Naive thymus-derived CD4-positive, alpha-beta T cell (primary cell): ENCODE measurements at regions of chr12 and their contacts with region 1.

Region 1: DNA sequence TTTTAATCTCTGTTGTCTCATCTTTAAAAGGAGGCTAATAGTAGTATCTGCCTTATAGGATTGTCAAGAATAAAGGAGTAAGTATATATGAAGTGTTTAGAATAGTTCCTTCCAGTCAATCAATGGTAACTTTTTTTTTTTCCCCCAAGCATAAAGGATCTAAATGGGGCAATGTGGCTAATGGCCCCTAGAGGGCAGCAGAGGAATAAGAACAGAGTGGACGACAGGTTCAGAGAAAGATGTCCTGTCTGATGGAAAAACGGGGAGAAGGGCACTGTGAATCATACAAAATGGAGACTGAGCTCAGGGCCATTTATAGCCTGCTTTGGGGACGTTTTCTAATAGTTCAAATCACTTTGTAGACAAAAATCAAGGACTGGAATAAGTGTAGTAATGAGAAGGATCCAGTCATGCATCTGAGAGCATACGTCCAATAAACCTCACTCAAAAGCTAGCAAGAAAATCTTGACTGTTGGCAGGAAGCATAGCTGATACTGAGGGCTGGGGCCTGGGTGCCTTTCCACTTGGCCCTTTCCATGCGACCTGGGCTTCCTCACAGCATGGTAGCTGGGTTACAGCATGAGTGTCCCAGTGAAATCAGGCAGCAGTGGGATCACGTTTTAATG is 51.3 kb downstream of the IFNG-AS1 start:
- DNase-seq: peak; percentile 19 to 72 (median 61)
- ATAC-seq: peak; percentile 84
- H3K4me3 ChIP-seq: no peak overlapping the region
- H3K4me3 Mint-ChIP-seq: peak overlapping the region in 2 of 10 donors; percentile 13 to 33
- H3K27ac ChIP-seq: no peak overlapping the region
- H3K27ac Mint-ChIP-seq: no peak overlapping the region
- H3K4me1 ChIP-seq: peaks cover 0 to 5% of the 10 kb centered on the region in 2 donors
- H3K4me1 Mint-ChIP-seq: peaks cover 0 to 24% (median 5%) of the 10 kb centered on the region in 7 donors
- H3K27me3 ChIP-seq: no peaks in the 10 kb centered on the region
- H3K27me3 Mint-ChIP-seq: no peaks in the 10 kb centered on the region

Region 2: DNA sequence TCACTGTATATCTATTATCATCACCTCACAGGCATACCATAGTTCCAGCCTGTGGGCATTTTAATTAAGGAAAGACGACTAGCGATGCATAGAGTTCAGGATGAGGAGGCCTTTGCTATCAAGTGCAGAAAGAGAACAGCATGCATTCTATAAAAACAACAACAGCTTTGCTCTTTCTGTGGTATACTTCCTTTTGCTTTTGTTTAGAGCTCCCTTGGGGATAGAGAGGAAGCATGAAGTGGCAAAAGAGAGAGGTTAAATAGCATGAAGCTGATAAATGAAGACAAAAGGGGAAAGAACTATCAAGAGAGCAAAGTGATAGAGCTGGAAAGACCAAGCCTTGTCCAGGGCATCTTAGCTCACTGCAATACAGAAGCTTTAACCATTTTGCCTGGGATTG is 27.9 kb before region 1 on chr12:
- CTCF ChIA-PET with region 1: no interaction called
- POLR2A ChIA-PET with region 1: no interaction called
- intact Hi-C with region 1: loop called in 1 of 2 experiments (anchors 1 kb)
- DNase-seq: no peak
- ATAC-seq: no peak
- H3K4me3 ChIP-seq: no peak overlapping the region
- H3K4me3 Mint-ChIP-seq: no peak overlapping the region
- H3K27ac ChIP-seq: no peak overlapping the region
- H3K27ac Mint-ChIP-seq: no peak overlapping the region
- H3K4me1 ChIP-seq: peaks cover 0 to 16% of the 10 kb centered on the region in 2 donors
- H3K4me1 Mint-ChIP-seq: peaks cover 0 to 4% (median 0%) of the 10 kb centered on the region in 7 donors
- H3K27me3 ChIP-seq: no peaks in the 10 kb centered on the region
- H3K27me3 Mint-ChIP-seq: no peaks in the 10 kb centered on the region

Region 3: DNA sequence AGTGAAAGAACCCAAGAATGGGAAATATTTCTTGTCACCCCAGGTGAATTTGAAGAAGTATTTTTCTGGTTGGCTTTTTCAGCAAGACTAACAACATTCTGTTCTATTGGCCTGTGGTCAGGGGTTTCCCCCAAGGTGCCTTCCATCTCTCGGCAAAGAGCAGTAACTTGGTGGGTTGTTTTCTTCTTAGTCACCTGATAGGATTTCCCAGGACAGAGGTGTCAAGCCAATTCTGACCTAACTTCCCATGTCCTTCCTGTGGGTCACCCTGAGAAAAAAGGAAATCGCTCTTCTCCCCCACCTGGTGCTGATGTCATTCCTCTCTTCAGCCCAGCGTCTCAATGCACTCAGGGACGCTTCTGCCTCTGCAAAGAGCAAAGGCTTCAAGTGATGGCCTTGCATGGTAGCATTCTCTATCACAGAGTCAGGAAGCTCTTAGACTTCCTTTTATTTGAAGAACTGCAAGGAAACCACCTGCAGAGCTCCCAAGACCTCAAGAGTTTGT is 135.0 kb after region 1 on chr12:
- CTCF ChIA-PET with region 1: interaction called, 3 read pairs
- POLR2A ChIA-PET with region 1: no interaction called
- intact Hi-C with region 1: loop called in 1 of 2 experiments (anchors 5 kb)
- DNase-seq: peak; percentile 35 to 90 (median 86)
- ATAC-seq: peak; percentile 93
- H3K4me3 ChIP-seq: peak overlapping the region; percentile 40
- H3K4me3 Mint-ChIP-seq: peak overlapping the region; percentile 69 to 86 (median 84)
- H3K27ac ChIP-seq: peak overlapping the region; percentile 78
- H3K27ac Mint-ChIP-seq: peak overlapping the region; percentile 87 to 97 (median 93)
- H3K4me1 ChIP-seq: peaks cover 20 to 65% of the 10 kb centered on the region in 2 donors
- H3K4me1 Mint-ChIP-seq: peaks cover 30 to 82% (median 67%) of the 10 kb centered on the region in 7 donors
- H3K27me3 ChIP-seq: no peaks in the 10 kb centered on the region
- H3K27me3 Mint-ChIP-seq: no peaks in the 10 kb centered on the region

Region 4: DNA sequence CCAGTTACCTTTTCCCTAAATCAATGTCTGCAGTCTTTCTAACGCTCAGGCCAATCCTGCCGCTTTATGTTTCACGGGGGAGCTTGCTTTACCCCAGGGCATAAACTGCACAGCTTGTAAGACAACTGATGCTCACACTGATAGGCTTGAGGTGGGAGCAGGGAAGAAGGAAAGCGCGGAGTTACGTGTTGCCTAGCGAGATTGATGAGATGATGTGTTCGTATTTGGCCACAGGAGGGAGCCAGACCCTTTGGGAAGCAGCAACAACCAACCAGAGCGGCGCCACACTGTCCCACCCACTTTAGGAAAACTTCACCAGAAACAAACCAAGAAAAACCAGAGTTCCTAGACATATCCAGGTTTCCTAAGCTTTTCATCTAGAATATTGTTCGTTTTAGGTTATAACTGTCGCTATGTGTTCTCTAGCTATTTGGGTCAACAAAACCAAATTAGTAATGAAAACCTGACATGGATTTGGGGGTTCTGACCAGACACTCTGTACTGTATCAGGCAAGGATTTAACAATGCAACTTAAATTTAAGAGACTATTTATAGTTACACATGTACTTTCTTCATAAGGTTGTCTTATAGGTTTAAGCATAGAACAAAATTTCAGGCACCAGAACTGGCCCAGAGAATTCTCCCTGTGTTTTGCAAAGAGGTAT is 182.7 kb after region 1 on chr12:
- CTCF ChIA-PET with region 1: interaction called, 12 read pairs
- POLR2A ChIA-PET with region 1: no interaction called
- intact Hi-C with region 1: loop called (anchors 1 kb)
- DNase-seq: peak; percentile 39 to 74 (median 64)
- ATAC-seq: peak; percentile 99
- H3K4me3 ChIP-seq: no peak overlapping the region
- H3K4me3 Mint-ChIP-seq: peak overlapping the region in 9 of 10 donors; percentile 30 to 86 (median 65)
- H3K27ac ChIP-seq: no peak overlapping the region
- H3K27ac Mint-ChIP-seq: peak overlapping the region in 6 of 9 donors; percentile 8 to 77 (median 44)
- H3K4me1 ChIP-seq: no peaks in the 10 kb centered on the region
- H3K4me1 Mint-ChIP-seq: peaks cover 6 to 35% (median 6%) of the 10 kb centered on the region in 7 donors
- H3K27me3 ChIP-seq: no peaks in the 10 kb centered on the region
- H3K27me3 Mint-ChIP-seq: peaks cover 0 to 11% (median 0%) of the 10 kb centered on the region in 5 donors

Region 5: GRCh38 chr12:69070319-69071090 is 1029.9 kb after region 1 on chr12:
- CTCF ChIA-PET with region 1: no interaction called
- POLR2A ChIA-PET with region 1: no interaction called
- intact Hi-C with region 1: loop called in 1 of 2 experiments (anchors 1 kb)
- DNase-seq: peak; percentile 7 to 58 (median 45)
- ATAC-seq: peak; percentile 81
- H3K4me3 ChIP-seq: no peak overlapping the region
- H3K4me3 Mint-ChIP-seq: no peak overlapping the region
- H3K27ac ChIP-seq: no peak overlapping the region
- H3K27ac Mint-ChIP-seq: no peak overlapping the region
- H3K4me1 ChIP-seq: no peaks in the 10 kb centered on the region
- H3K4me1 Mint-ChIP-seq: peaks cover 0 to 7% (median 0%) of the 10 kb centered on the region in 7 donors
- H3K27me3 ChIP-seq: no peaks in the 10 kb centered on the region
- H3K27me3 Mint-ChIP-seq: peaks cover 10 to 16% (median 14%) of the 10 kb centered on the region in 5 donors